Transverse colon (tissue), 4 donors: ENCODE measurements at regions of chr4 and their contacts with region 1.

Region 1: GRCh38 chr4:8468746-8469535 is 28.4 kb downstream of the TRMT44 start:
- DNase-seq: peak; percentile 55
- H3K4me3 ChIP-seq: no peak overlapping the region
- H3K27ac ChIP-seq: no peak overlapping the region
- H3K4me1 ChIP-seq: peaks cover 5 to 20% (median 12%) of the 10 kb centered on the region in 4 donors
- H3K27me3 ChIP-seq: no peaks in the 10 kb centered on the region
- CTCF ChIP-seq: peak; percentile 74 to 94 (median 85)
- EP300 ChIP-seq: no peak
- POLR2A ChIP-seq: no peak

Region 2: DNA sequence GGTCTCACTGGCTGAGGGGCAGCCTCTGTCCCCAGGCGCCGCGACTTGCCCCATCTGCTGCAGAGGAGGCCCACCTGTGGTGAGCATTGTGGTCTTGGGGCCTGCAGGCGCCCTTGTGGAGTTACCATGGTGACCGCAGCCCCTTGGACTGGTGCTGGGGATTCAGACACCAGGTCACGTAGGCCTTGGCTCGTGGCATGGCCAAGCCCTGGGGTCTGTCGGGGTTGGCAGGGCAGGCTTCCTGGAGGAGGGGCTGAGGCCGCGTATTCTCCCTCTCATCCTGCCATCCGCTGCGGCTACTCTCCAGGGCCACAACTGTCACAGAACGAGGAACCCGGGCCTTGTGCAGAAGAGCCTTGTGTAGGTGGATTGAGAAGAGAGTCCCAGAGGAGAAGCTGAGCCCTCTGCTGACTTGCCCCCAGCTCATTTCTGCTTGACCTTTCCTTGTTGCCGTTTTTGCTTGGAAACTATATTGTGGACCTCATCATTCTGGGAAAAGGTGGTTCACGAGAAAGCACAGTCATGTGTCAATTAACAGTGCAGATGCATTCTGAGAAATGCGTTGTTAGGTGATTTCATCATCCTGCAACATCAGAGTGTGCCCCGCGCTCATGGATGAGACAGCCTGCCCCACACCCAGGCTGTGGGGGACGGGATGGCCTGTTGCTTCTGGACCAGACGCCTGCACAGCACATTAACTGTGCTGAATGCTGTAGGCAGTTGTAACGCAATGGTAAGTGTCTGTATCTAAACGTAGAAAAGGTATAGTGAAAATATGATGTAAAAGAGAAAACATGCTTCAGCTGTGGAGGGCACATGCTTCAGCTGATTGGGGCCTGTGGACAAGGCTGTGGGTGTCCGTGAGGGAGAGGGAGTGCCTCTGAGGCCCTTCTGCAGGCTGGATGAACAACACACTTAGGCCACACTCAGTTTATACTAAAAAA is 10.1 kb after region 1 on chr4:
- in situ Hi-C with region 1: no loop called
- intact Hi-C with region 1: no loop called
- DNase-seq: no peak
- H3K4me3 ChIP-seq: no peak overlapping the region
- H3K27ac ChIP-seq: no peak overlapping the region
- H3K4me1 ChIP-seq: no peaks in the 10 kb centered on the region
- H3K27me3 ChIP-seq: no peaks in the 10 kb centered on the region
- CTCF ChIP-seq: no peak
- EP300 ChIP-seq: no peak
- POLR2A ChIP-seq: no peak

Region 3: GRCh38 chr4:8547971-8548750 is 79.2 kb after region 1 on chr4:
- in situ Hi-C with region 1: no loop called
- intact Hi-C with region 1: loop called (anchors 2 kb)
- DNase-seq: no peak
- H3K4me3 ChIP-seq: no peak overlapping the region
- H3K27ac ChIP-seq: no peak overlapping the region
- H3K4me1 ChIP-seq: no peaks in the 10 kb centered on the region
- H3K27me3 ChIP-seq: no peaks in the 10 kb centered on the region
- CTCF ChIP-seq: no peak
- EP300 ChIP-seq: no peak
- POLR2A ChIP-seq: no peak

Region 4: GRCh38 chr4:8594097-8595038 is 125.4 kb after region 1 on chr4:
- in situ Hi-C with region 1: loop called in 2 of 4 experiments (anchors 10 to 25 kb)
- intact Hi-C with region 1: loop called (anchors 5 kb)
- DNase-seq: peak; percentile 47
- H3K4me3 ChIP-seq: no peak overlapping the region
- H3K27ac ChIP-seq: no peak overlapping the region
- H3K4me1 ChIP-seq: no peaks in the 10 kb centered on the region
- H3K27me3 ChIP-seq: peaks cover 39% of the 10 kb centered on the region
- CTCF ChIP-seq: peak; percentile 55 to 66 (median 64)
- EP300 ChIP-seq: no peak
- POLR2A ChIP-seq: no peak